ENCODE measurements at regions of chr1 and their contacts with region 1.

Region 1: DNA sequence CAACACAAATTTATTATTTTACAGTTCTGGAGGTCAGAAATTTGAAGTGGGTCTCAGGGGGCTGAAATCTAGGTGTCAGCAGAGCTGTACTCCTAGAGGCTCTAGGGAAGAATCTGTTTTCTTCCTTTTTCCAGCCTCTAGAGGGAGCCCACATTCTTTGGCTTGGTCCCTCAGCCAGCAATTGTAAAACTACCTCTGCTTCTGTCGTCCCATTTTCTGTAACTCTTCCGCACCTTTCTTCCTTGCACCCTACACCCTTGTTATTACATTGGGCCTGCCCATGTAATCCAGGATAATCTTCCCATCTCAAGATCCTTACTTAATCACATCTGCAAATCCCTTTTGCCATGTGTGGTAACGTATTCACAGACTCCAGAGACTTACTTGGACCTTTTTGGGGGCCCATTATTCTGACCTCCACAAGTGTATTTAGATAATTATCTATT is 24.8 kb upstream of the THEM4 start:
- DNase-seq: peak in 1 of 2 donors; percentile 84
- ATAC-seq: peak; percentile 84 to 98 (median 91)
- H3K4me3 ChIP-seq: no peak overlapping the region
- H3K4me3 Mint-ChIP-seq: no peak overlapping the region
- H3K27ac ChIP-seq: no peak overlapping the region
- H3K27ac Mint-ChIP-seq: peak overlapping the region in 1 of 2 donors; percentile 42
- H3K4me1 ChIP-seq: no peaks in the 10 kb centered on the region
- H3K4me1 Mint-ChIP-seq: peaks cover 0 to 5% of the 10 kb centered on the region in 2 donors
- H3K27me3 ChIP-seq: no peaks in the 10 kb centered on the region
- H3K27me3 Mint-ChIP-seq: peaks cover 8 to 9% of the 10 kb centered on the region in 2 donors
- CTCF ChIP-seq: peak; percentile 92

Region 2: GRCh38 chr1:152001391-152002249 is 67.5 kb after region 1 on chr1:
- intact Hi-C with region 1: loop called (anchors 1 kb)
- DNase-seq: peak; percentile 67 to 88
- ATAC-seq: peak; percentile 72 to 85 (median 83)
- H3K4me3 ChIP-seq: no peak overlapping the region
- H3K4me3 Mint-ChIP-seq: no peak overlapping the region
- H3K27ac ChIP-seq: no peak overlapping the region
- H3K27ac Mint-ChIP-seq: no peak overlapping the region
- H3K4me1 ChIP-seq: peaks cover 7% of the 10 kb centered on the region
- H3K4me1 Mint-ChIP-seq: no peaks in the 10 kb centered on the region
- H3K27me3 ChIP-seq: peaks cover 2% of the 10 kb centered on the region
- H3K27me3 Mint-ChIP-seq: peaks cover 12 to 15% of the 10 kb centered on the region in 2 donors
- CTCF ChIP-seq: peak; percentile 96